Activated T-helper 2 cell treated with anti-CD3 and anti-CD28 coated beads, Interferon-gamma antibody, Interleukin-2, Interleukin-4, amounts not matched to agents 10 μg/mL and 5 μg/mL and 100 μg/mL, durations not matched to agents 14 hours and 24 hours and 36 hours (primary cell): ENCODE measurements at regions of chr10 and their contacts with region 1.

Region 1: DNA sequence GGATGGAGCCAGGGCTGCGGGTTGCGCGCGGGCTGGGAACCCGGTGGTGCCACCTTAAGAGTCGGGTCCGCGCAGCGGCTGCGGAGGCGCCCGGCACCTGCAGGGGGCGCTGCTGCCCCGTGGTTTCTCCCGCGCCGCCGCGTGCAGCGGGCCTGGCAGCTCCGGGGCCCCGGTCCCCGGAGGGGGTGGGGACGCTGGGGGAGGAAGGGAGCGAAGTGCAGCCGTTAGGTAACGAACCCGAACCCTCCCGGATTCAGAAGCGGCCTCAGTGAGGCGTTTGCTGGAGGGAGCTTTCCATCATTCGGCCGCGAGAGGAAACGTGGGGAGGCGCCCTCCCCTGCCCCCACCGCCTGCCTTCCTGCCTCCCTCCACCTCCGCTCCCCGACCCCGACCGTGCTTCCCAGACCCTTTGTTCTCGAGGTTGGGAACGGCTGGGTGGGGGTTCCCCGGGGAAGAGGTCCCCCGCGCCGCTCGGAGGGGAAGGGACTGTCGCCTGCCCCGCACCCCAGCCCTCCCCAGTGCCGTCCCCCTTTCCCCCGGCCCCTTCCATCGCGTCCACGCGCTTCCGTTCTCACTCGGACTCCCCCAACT is 29.6 kb downstream of the SKIDA1 start:
- DNase-seq: peak; percentile 82
- H3K4me3 Mint-ChIP-seq: peak overlapping the region; percentile 84
- H3K27ac Mint-ChIP-seq: no peak overlapping the region
- H3K4me1 Mint-ChIP-seq: peaks cover 17% of the 10 kb centered on the region
- H3K27me3 Mint-ChIP-seq: peaks cover 68% of the 10 kb centered on the region

Region 2: GRCh38 chr10:21278491-21279239 is 217.2 kb before region 1 on chr10:
- intact Hi-C with region 1: loop called (anchors 10 kb)
- DNase-seq: peak; percentile 48
- H3K4me3 Mint-ChIP-seq: no peak overlapping the region
- H3K27ac Mint-ChIP-seq: no peak overlapping the region
- H3K4me1 Mint-ChIP-seq: no peaks in the 10 kb centered on the region
- H3K27me3 Mint-ChIP-seq: no peaks in the 10 kb centered on the region

Region 3: GRCh38 chr10:21523557-21524008 is 27.7 kb after region 1 on chr10:
- intact Hi-C with region 1: no loop called
- DNase-seq: no peak
- H3K4me3 Mint-ChIP-seq: no peak overlapping the region
- H3K27ac Mint-ChIP-seq: no peak overlapping the region
- H3K4me1 Mint-ChIP-seq: peaks cover 47% of the 10 kb centered on the region
- H3K27me3 Mint-ChIP-seq: peaks cover 49% of the 10 kb centered on the region

Region 4: GRCh38 chr10:21533467-21534279 is 37.8 kb after region 1 on chr10 and contains the start of gene MLLT10:
- intact Hi-C with region 1: loop called (anchors 5 kb)
- DNase-seq: peak; percentile 88
- H3K4me3 Mint-ChIP-seq: peak within 1 kb of the TSS; percentile 85
- H3K27ac Mint-ChIP-seq: peak within 1 kb of the TSS; percentile 89
- H3K4me1 Mint-ChIP-seq: peaks cover 19% of the 10 kb centered on the region
- H3K27me3 Mint-ChIP-seq: peaks cover 20% of the 10 kb centered on the region
- total RNA-seq, gene MLLT10: 45.4 and 47.4 TPM in 2 replicates

Region 5: DNA sequence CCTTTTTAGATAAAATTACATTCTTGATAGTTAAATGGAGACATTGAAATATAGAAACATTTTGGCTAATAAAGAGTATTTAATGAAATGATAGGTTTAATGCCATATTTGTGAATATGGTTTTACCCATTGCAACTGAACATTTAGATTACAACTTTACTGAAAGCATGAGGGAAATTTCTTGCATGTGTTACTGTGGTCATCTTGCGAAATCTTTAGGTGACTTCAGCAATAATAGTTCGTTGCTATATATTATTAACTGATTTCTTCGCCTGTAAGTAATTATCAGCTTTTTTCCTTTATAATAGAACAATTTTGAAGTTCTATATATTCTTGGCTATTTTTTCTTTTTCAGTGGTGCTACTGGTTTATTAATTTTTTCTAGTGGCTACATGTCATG is 121.4 kb after region 1 on chr10:
- intact Hi-C with region 1: no loop called
- DNase-seq: no peak
- H3K4me3 Mint-ChIP-seq: no peak overlapping the region
- H3K27ac Mint-ChIP-seq: no peak overlapping the region
- H3K4me1 Mint-ChIP-seq: peaks cover 7% of the 10 kb centered on the region
- H3K27me3 Mint-ChIP-seq: no peaks in the 10 kb centered on the region

Region 6: DNA sequence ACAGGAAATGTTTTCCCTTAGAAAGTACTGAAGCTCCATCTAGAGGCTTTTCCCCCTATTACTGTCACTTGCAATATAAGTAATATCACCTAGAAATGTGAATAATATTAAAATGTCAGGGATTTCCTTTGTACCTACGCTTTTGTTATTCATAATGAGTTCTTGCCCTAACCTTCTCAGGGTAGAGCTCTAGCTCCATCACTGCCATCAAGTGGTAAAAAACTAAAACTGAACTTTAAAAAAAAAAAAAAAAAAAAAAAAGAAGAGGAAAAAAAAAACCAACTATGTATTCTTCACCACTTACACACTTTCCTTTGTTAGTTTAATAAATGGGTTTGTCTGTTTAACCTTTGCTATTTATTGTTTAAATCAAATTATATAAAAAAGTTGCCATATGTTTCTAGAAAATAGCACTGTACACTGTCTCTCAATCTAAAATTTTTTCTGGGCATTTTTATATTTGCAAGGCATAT is 457.8 kb after region 1 on chr10:
- intact Hi-C with region 1: loop called (anchors 1 kb)
- DNase-seq: no peak
- H3K4me3 Mint-ChIP-seq: no peak overlapping the region
- H3K27ac Mint-ChIP-seq: no peak overlapping the region
- H3K4me1 Mint-ChIP-seq: peaks cover 3% of the 10 kb centered on the region
- H3K27me3 Mint-ChIP-seq: no peaks in the 10 kb centered on the region

Region 7: GRCh38 chr10:23192737-23193434 is 1697.0 kb after region 1 on chr10:
- intact Hi-C with region 1: loop called (anchors 10 kb)
- DNase-seq: no peak
- H3K4me3 Mint-ChIP-seq: no peak overlapping the region
- H3K27ac Mint-ChIP-seq: no peak overlapping the region
- H3K4me1 Mint-ChIP-seq: no peaks in the 10 kb centered on the region
- H3K27me3 Mint-ChIP-seq: peaks cover 70% of the 10 kb centered on the region